ENCODE measurements at regions of chr3 and their contacts with region 1.

Region 1: DNA sequence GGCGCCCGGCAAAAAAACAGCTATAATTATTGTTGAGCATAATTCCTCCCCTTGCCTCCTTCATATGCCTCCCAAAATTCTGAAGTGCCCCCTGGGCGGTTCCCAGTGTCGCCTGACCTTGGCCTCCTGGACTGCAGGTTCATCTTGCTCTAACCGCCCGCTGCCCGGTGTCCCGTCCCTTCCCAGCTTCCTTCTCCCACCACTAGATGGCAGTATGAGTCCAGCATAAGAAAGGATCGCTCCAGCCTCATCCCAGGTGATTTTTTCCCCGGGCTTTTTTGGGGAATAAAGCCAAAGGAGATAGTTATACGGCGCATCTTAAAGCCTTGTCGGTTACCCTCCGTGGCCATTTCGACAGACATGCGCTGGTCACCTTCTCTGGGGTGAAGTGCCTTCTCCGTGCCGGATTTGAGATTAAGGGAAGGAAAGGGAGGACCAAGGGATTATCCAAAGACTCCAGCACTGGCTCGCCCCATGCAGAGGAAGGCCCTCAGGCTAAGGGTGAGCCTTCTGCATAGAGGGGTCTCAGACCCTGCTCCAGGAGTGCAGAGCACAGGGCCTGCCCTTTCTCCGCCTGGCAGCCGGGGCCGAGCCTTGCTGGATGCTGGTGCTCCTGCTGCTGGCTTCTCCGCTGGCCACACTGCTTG is 45.8 kb upstream of the TRA2B start:
- DNase-seq: peak; percentile 58
- H3K4me3 Mint-ChIP-seq: no peak overlapping the region
- H3K27ac Mint-ChIP-seq: no peak overlapping the region
- H3K4me1 Mint-ChIP-seq: peaks cover 4% of the 10 kb centered on the region
- H3K27me3 Mint-ChIP-seq: peaks cover 9% of the 10 kb centered on the region

Region 2: GRCh38 chr3:186109897-186110803 is 126.5 kb after region 1 on chr3:
- CTCF ChIA-PET with region 1: no interaction called
- POLR2A ChIA-PET with region 1: no interaction called
- DNase-seq: no peak
- H3K4me3 Mint-ChIP-seq: peak overlapping the region; percentile 77
- H3K27ac Mint-ChIP-seq: no peak overlapping the region
- H3K4me1 Mint-ChIP-seq: peaks cover 38% of the 10 kb centered on the region
- H3K27me3 Mint-ChIP-seq: peaks cover 83% of the 10 kb centered on the region

Region 3: DNA sequence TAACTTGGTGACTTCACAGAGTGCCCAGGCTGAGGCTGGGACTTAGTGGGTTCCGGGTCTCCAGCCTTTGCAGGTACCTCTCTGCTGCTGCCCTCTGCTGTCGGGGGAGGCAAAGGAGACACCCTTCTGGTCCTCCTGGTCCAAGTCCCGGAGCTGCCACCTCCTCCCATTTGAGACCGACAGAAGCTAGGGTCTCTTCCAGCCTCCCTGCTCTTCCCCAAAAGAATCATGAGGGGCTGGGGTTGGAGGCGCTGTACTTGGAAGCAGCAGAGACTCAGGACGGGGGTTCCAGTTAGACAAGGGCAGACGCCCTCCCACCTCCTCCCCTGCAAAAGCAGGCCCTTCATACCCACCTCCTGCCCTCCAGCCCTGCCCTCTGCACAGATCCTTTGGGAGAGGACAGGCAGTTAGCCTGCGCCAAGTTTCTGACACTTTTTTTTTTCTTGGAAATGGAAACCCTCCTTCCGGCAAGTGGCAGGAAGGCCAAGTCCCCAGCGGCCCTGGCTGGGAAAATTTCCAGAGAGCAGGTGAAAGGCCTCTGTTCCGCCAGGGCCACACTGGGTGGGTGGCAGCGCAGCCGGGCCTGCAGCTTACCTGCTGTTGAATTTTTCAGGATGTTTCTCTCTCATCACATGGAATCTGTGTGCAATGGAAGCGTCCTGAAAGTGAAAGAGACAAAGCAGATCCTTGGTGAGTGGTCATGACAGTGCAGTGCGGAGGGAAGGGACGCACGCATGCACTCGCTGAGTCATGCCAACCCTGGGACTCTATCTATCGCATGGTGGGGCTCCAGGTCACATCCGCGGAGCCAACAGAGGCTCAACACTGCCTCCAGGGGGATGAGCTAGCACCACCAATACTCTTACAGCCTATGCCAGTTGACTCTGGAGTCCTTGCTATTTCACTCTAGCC is 258.5 kb after region 1 on chr3:
- CTCF ChIA-PET with region 1: interaction called, 12 read pairs
- POLR2A ChIA-PET with region 1: no interaction called
- DNase-seq: peak; percentile 66
- H3K4me3 Mint-ChIP-seq: peak overlapping the region; percentile 27
- H3K27ac Mint-ChIP-seq: no peak overlapping the region
- H3K4me1 Mint-ChIP-seq: peaks cover 10% of the 10 kb centered on the region
- H3K27me3 Mint-ChIP-seq: peaks cover 8% of the 10 kb centered on the region

Measured in activated CD4-positive, alpha-beta memory T cell treated with anti-CD3 and anti-CD28 coated beads, Interleukin-2, amount 10 ng/mL, durations not matched to agents 7 days and 5 days (primary cell).